ENCODE measurements at regions of chr6 and their contacts with region 1.

Region 1: GRCh38 chr6:168526841-168527281 is 85.9 kb downstream of the SMOC2 start:
- DNase-seq: no peak
- H3K4me3 ChIP-seq: no peak overlapping the region
- H3K27ac ChIP-seq: no peak overlapping the region
- H3K4me1 ChIP-seq: peaks cover 0 to 3% (median 2%) of the 10 kb centered on the region in 4 experiments; a peak in 2 of 7 replicates
- H3K27me3 ChIP-seq: no peaks in the 10 kb centered on the region
- CTCF ChIP-seq: no peak
- EP300 ChIP-seq: no peak
- POLR2A ChIP-seq: no peak
- RAD21 ChIP-seq: no peak

Region 2: DNA sequence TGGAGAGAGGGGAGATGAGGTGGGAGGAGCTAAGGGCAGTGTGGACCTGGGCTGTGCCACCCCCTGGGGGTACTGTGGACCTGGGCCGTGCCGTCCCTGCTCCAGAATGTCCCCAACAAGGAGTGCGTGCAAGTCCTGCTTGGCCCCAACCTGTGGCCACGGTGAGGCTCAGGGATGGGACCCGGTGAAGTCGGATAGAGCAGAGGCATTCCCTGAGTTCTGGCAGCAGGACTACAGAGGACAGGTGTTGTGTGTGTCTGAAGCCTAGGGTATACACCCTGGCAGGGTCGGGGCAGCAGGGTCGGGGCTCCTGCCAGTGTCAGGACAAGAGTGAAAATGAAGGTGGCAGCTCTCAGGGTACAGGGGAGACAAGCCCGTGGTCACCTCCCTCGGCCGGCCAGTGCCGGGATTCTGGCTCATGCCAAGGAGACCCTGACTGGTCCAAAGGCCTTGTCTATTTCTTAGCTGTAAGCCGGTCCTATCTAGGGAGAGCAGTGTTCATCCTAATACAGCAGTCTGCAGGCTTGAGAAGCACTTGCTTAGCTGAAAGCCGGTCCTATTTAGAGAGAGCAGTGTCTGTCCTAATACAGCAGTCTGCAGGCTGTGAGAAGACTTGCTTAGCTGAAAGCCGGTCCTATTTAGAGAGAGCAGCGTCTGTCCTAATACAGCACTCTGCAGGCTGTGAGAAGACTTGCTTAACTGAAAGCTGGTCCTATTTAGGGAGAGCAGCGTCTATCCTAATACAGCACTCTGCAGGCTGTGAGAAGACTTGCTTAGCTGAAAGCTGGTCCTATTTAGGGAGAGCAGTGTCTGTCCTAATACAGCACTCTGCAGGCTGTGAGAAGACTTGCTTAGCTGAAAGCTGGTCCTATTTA is 10.0 kb after region 1 on chr6:
- CTCF ChIA-PET with region 1: interaction called, 19 read pairs
- POLR2A ChIA-PET with region 1: interaction called, 4 read pairs
- DNase-seq: no peak
- H3K4me3 ChIP-seq: no peak overlapping the region
- H3K27ac ChIP-seq: no peak overlapping the region
- H3K4me1 ChIP-seq: peaks cover 9 to 34% (median 17%) of the 10 kb centered on the region in 4 experiments
- H3K27me3 ChIP-seq: no peaks in the 10 kb centered on the region
- CTCF ChIP-seq: no peak
- EP300 ChIP-seq: no peak
- POLR2A ChIP-seq: no peak
- RAD21 ChIP-seq: no peak

Region 3: DNA sequence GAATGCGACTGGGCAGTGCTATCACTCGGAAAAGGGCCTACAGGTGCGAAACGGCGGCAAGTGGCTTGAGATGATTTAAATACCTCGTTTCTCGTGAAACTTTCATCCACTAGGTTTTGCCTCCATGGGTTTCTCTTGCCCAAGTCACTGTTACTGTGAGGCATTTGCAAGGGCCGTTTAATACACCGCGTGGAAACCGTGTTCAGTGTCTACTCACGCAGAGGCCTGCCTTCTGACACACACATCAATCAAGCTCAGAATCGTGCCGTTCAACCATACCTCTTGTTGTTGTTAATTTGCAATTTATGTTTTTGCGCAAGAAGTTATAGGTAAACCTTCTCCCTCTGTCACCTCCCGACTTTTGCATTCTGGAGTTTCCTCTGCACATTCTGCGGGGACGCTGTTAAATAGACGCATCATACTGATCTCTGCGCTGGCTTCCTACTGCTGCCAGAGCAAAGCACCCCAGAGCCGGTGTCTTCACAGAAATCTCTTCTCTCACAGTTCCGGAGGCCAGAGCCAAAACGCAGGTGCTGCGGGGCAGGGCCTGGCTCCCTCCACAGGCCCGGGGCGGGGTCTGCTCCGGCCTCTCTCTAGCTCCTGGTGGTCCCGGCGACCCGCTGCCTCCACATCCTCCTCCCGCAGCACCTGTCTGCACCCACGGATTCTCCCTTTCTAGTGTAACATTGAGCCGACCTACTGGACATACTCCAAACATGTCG is 165.5 kb after region 1 on chr6:
- CTCF ChIA-PET with region 1: no interaction called
- POLR2A ChIA-PET with region 1: no interaction called
- DNase-seq: peak in 1 of 2 experiments; percentile 55
- H3K4me3 ChIP-seq: no peak overlapping the region
- H3K27ac ChIP-seq: no peak overlapping the region
- H3K4me1 ChIP-seq: peaks cover 1 to 8% (median 6%) of the 10 kb centered on the region in 4 experiments; a peak in 5 of 7 replicates
- H3K27me3 ChIP-seq: no peaks in the 10 kb centered on the region
- CTCF ChIP-seq: no peak
- EP300 ChIP-seq: no peak
- POLR2A ChIP-seq: no peak
- RAD21 ChIP-seq: peak in 1 of 2 experiments; percentile 14; a peak in 1 of 4 replicates